AG04450 (cell line): ENCODE measurements at regions of chr3 and their contacts with region 1.

Region 1: DNA sequence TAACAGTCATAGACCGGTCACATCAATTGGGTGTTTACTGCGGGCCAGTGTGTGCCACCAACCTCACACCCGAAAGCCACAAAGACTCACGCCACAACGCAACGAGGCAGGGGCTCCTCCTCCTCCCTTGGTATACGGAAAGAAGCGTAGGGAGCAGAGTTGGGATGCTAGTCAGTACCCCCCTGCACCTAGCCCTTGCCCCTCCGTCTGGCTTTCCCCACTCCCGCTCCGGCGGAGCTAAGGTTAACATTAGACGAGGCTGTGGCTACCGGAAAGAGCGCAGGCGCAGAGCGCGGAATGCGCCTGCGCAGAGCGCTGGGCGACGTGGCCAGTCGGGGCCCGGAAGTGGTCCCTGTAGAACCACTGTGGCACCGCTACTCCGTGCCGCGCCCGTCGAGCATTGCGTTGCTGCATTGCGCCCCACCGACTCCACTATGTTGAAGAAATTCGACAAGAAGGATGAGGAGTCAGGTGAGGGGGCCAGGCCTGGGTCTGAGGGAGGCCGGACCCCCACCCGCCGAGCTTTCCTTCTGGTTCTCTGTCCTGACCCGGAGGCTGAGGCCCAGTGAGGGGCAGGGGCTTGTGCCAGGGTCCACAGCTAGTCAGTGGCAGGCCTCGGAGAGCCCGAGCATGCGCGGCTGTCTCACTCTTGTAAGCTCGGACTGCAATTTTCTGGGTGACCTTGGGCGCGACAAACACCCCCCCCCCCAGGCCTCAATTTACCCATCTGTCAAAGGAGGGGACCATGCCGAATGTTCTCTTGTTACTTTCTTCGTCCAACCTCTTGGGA is at the start of gene COPG1:
- DNase-seq: peak; percentile 75
- H3K4me3 ChIP-seq: peak within 1 kb of the TSS; percentile 100
- H3K27ac ChIP-seq: peak within 1 kb of the TSS; percentile 97
- H3K27me3 ChIP-seq: no peaks in the 10 kb centered on the region
- CTCF ChIP-seq: no peak
- polyA plus RNA-seq, gene COPG1: 229 and 231 TPM in 2 replicates

Region 2: GRCh38 chr3:129120254-129121004 is 129.0 kb before region 1 on chr3:
- CTCF ChIA-PET with region 1: interaction called, 10 read pairs
- POLR2A ChIA-PET with region 1: interaction called, 14 read pairs
- DNase-seq: peak; percentile 55
- H3K4me3 ChIP-seq: peak overlapping the region; percentile 84
- H3K27ac ChIP-seq: peak overlapping the region; percentile 70
- H3K27me3 ChIP-seq: no peaks in the 10 kb centered on the region
- CTCF ChIP-seq: 0 out of 2 replicates have a peak, but pooled peaks have one; percentile 29

Region 3: GRCh38 chr3:129160891-129161859 is 88.3 kb before region 1 on chr3 and contains the start of gene ISY1:
- CTCF ChIA-PET with region 1: interaction called, 11 read pairs
- POLR2A ChIA-PET with region 1: interaction called, 23 read pairs
- DNase-seq: peak; percentile 91
- H3K4me3 ChIP-seq: peak within 1 kb of the TSS; percentile 90
- H3K27ac ChIP-seq: peak within 1 kb of the TSS; percentile 100
- H3K27me3 ChIP-seq: no peaks in the 10 kb centered on the region
- CTCF ChIP-seq: peak; percentile 85
- polyA plus RNA-seq, gene ISY1: 29.7 and 34.3 TPM in 2 replicates

Region 4: DNA sequence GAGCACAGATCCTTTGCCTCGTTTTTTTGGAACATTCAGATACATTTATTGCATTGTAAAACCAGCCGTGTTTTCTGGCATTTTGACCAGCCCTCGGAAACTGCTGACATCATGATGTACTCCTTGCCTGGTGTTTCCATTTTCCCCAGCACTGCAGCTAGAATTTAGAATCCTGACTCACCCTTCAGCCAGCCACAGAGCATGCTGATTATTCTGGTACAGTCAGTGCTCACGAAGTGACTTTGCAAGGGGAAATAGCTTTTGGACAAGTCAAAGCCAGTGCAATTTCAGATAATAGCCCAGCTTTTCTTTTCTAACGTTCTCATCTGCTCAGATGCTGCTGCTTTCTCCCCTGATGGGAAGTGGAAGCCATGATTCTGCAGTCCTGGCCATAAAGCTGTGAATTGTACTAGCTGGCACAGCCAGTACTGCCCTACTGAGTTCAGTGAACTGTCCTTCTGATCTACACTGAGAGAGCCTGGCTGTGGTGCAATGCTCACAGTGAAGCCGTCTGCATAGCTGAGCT is 53.7 kb before region 1 on chr3:
- CTCF ChIA-PET with region 1: interaction called, 29 read pairs
- POLR2A ChIA-PET with region 1: interaction called, 6 read pairs
- DNase-seq: peak; percentile 81
- H3K4me3 ChIP-seq: peak overlapping the region; percentile 33
- H3K27ac ChIP-seq: peak overlapping the region; percentile 89
- H3K27me3 ChIP-seq: no peaks in the 10 kb centered on the region
- CTCF ChIP-seq: no peak

Region 5: DNA sequence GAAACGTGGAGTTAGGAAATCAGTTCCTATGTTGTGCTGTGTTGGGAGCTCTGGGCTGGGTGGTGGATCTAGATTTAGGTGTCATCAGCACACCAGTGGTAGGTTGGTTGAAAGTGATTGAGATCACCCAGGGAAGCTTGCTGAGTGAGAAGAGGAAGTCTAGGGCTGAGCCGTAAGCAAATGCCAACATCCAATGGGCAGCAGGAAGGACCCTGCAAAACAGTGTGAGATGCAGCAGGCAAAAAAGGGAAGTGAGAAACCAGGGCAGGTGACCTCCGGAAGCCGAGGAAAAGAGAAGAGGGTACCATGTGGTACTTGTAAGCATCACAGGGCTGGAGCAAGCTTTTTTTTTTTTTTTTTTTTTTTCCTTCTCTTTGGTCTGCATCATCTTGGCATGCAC is 15.9 kb before region 1 on chr3:
- CTCF ChIA-PET with region 1: interaction called, 31 read pairs
- POLR2A ChIA-PET with region 1: interaction called, 13 read pairs
- DNase-seq: no peak
- H3K4me3 ChIP-seq: no peak overlapping the region
- H3K27ac ChIP-seq: no peak overlapping the region
- H3K27me3 ChIP-seq: no peaks in the 10 kb centered on the region
- CTCF ChIP-seq: no peak